Ovary (tissue), 10 donors: ENCODE measurements at regions of chr9 and their contacts with region 1.

Region 1: GRCh38 chr9:94772639-94773303 is 46.3 kb downstream of the AOPEP start:
- DNase-seq: no peak
- H3K4me3 ChIP-seq: no peak overlapping the region
- H3K27ac ChIP-seq: no peak overlapping the region
- H3K4me1 ChIP-seq: peaks cover 4% of the 10 kb centered on the region
- H3K27me3 ChIP-seq: no peaks in the 10 kb centered on the region
- CTCF ChIP-seq: no peak
- EP300 ChIP-seq: no peak
- POLR2A ChIP-seq: no peak

Region 2: DNA sequence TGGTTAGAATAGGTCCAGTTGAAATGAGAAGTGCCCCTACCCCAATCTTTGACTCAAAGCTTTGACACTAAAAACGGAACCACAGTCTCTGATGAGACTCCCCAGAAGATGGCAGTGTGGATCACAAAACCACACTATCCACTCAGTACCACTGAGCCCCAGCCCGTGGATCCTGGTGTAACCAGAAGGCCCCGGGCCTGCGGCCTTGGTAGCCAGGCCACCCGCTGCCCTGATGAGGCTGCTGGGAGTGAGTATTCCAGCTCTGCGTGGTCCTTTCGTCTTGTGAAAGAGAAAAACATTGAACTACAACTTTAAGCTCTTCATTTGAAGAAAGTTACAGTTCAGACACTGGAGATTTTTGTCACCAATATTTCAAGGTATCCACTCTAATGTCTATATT is 91.3 kb before region 1 on chr9:
- intact Hi-C with region 1: loop called in 1 of 4 experiments (anchors 10 kb)
- DNase-seq: peak; percentile 75 to 83 (median 82)
- H3K4me3 ChIP-seq: no peak overlapping the region
- H3K27ac ChIP-seq: no peak overlapping the region
- H3K4me1 ChIP-seq: no peaks in the 10 kb centered on the region
- H3K27me3 ChIP-seq: no peaks in the 10 kb centered on the region
- CTCF ChIP-seq: peak; percentile 67 to 81 (median 71)
- EP300 ChIP-seq: no peak
- POLR2A ChIP-seq: no peak